BJ (cell line): ENCODE measurements at regions of chr10 and their contacts with region 1.

Region 1: DNA sequence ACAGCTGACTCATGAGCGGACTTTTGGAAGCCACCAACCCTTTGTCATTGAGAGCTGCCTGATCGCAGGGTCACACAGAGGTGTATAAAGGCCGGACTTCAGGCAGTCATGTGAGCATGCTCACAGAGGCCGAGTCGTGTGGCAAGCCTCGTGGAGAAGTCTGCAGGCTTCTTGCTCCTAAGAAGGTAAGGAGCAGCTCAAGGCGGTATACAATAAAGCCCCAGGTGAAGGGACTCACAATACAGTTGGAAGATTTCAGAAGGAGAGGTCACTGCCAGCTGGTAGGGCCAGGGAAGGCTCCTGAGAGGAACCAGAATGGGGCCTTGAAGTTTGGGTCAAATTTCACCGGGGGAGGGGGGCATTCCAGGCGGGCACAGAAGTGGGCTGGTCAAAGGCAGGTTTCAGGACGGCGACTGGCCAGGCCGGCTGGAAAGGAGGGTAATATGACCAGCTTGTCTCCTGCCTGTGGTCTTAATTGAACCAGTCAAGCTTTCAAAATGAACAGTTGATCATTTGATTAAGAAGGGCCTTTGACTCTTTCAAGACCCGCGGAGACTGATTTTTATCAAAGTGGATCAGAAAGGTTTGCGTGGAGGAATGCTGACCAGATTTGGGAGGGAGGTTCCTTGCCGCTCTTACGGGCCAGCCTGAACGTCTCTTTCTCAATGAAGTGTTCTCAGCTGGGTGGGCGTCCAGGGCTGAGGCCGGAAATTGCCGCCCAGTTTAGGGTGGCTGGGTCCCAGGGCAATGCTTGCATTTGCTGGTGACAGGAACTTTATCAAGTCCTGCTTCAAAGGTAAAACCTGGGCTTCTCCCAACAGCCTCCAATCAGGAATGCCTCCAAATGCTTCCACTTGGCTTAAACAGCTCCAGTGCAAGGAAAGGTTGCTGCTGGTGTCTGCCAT is 178.6 kb downstream of the EMX2 start:
- DNase-seq: no peak
- H3K4me3 ChIP-seq: no peak overlapping the region
- H3K27me3 ChIP-seq: no peaks in the 10 kb centered on the region
- CTCF ChIP-seq: no peak

Region 2: DNA sequence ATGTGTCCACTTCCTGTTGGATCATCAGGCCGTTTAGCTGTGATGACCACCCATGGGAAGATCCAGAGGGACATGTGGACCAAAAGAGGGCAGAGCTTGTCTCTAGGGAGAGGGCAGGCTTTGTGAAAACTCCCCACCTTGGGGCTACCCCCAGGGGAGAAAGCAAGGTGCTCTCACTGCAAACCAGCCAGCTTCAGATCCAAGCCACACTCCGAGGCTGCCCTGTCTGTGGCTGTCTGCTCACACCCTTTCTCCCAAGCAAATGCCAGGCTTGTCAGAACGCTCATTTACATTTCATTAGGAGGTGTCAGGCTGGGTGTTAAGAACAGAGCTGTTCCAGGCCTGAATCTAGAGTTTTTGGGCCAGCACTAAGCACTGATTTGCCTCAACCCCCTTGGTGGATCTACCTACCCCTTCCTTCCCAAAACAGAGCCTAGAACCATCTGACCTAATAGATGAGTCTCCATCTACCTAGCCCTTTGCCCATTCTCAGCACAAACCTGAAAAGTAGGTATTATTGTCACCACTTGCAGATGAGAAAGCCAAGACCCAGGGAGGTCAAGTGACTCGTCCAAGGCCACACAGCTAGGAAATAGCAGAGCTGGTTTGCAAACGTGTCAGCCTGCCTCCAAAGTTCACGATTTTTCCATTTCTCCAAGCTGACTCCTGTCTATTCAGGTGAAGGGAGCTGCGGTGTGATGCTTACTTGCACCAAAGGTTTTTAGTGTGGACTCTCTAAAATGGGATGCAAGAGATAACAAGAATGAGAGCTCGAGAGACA is 47.8 kb before region 1 on chr10:
- CTCF ChIA-PET with region 1: no interaction called
- POLR2A ChIA-PET with region 1: interaction called, 10 read pairs
- DNase-seq: no peak
- H3K4me3 ChIP-seq: no peak overlapping the region
- H3K27me3 ChIP-seq: no peaks in the 10 kb centered on the region
- CTCF ChIP-seq: no peak

Region 3: GRCh38 chr10:117710181-117710798 is 10.9 kb before region 1 on chr10:
- CTCF ChIA-PET with region 1: no interaction called
- POLR2A ChIA-PET with region 1: no interaction called
- DNase-seq: no peak
- H3K4me3 ChIP-seq: no peak overlapping the region
- H3K27me3 ChIP-seq: no peaks in the 10 kb centered on the region
- CTCF ChIP-seq: no peak

Region 4: GRCh38 chr10:117736684-117737083 is 15.5 kb after region 1 on chr10:
- CTCF ChIA-PET with region 1: no interaction called
- POLR2A ChIA-PET with region 1: no interaction called
- DNase-seq: no peak
- H3K4me3 ChIP-seq: no peak overlapping the region
- H3K27me3 ChIP-seq: no peaks in the 10 kb centered on the region
- CTCF ChIP-seq: no peak

Region 5: DNA sequence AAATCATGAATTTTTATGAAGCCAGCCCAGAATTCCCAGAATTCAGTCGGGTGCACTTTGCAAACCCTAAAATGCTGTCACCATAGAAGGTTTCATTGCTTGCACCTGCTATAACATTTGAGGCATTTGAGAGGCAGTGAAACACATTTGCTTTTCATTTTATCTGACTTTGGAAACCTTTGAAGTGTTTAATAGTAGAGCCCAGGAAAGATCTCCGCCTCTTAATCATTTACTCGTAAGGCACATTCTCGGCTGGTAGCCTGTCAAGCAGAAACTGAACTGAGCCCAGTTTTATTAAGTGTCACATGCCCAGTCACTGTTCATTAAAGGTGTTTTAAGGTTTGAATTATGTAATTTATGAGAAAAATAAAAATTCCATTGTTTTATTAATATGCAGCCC is 69.0 kb after region 1 on chr10:
- CTCF ChIA-PET with region 1: no interaction called
- POLR2A ChIA-PET with region 1: no interaction called
- DNase-seq: no peak
- H3K4me3 ChIP-seq: no peak overlapping the region
- H3K27me3 ChIP-seq: no peaks in the 10 kb centered on the region
- CTCF ChIP-seq: no peak